HepG2 (cell line): ENCODE measurements at regions of chr6 and their contacts with region 1.

Region 1: DNA sequence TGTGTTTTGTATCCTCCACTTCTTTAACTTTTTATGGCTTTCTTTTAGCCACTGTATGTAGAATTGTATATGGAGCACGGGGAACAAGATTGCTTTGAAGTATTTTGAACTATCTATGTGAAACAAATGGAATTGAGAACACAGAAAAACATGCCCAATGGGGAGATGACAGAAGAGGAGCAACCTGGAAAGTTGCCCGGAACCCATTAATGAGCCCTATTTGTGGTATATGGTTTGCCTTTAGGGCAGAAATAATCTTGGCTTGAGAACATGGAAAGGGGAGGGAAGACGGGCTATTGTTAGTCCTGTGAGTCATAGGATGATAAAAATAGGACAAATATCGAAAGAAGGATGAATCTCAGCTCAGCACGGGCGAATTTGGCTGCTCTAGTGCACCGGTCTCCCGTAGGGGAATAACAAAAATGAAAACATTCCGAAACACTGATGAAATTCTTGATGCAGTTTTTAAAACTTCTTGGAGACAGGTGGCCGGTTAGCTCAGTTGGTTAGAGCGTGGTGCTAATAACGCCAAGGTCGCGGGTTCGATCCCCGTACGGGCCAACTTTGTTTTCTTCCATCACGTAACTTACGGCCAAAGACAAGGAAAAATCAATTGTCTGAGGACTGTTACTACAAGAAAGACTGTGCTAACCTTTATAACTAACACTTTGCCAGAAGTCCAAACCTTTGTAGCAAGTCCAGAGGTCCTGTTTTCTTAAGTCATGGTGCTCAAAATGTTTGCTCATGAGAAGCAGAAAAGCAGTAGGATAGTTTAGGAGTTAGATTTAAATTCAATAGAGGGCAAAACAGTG is 15.7 kb downstream of the HMGN4 start:
- DNase-seq: peak; percentile 81
- ATAC-seq: peak; percentile 39
- H3K4me3 ChIP-seq: peak overlapping the region; percentile 77 to 81 (median 80)
- H3K27ac ChIP-seq: peak overlapping the region; percentile 39
- H3K4me1 ChIP-seq: peaks cover 51% of the 10 kb centered on the region
- H3K27me3 ChIP-seq: no peaks in the 10 kb centered on the region; a peak in 1 of 5 replicates
- CTCF ChIP-seq: no peak
- EP300 ChIP-seq: no peak
- POLR2A ChIP-seq: no peak
- RAD21 ChIP-seq: 0 out of 2 replicates have a peak, but pooled peaks have one; percentile 5

Region 2: GRCh38 chr6:25913741-25914140 is 640.1 kb before region 1 on chr6:
- CTCF ChIA-PET with region 1: no interaction called
- POLR2A ChIA-PET with region 1: no interaction called
- in situ Hi-C with region 1: no loop called
- intact Hi-C with region 1: no loop called
- DNase-seq: peak; percentile 83
- ATAC-seq: peak; percentile 86
- H3K4me3 ChIP-seq: no peak overlapping the region; a peak in 1 of 6 replicates
- H3K27ac ChIP-seq: peak overlapping the region; percentile 62
- H3K4me1 ChIP-seq: peaks cover 58% of the 10 kb centered on the region
- H3K27me3 ChIP-seq: no peaks in the 10 kb centered on the region
- CTCF ChIP-seq: no peak
- EP300 ChIP-seq: peak in 1 of 2 experiments; percentile 78; a peak in 1 of 4 replicates
- POLR2A ChIP-seq: peak in 1 of 2 experiments; percentile 24; a peak in 1 of 4 replicates
- RAD21 ChIP-seq: no peak

Region 3: DNA sequence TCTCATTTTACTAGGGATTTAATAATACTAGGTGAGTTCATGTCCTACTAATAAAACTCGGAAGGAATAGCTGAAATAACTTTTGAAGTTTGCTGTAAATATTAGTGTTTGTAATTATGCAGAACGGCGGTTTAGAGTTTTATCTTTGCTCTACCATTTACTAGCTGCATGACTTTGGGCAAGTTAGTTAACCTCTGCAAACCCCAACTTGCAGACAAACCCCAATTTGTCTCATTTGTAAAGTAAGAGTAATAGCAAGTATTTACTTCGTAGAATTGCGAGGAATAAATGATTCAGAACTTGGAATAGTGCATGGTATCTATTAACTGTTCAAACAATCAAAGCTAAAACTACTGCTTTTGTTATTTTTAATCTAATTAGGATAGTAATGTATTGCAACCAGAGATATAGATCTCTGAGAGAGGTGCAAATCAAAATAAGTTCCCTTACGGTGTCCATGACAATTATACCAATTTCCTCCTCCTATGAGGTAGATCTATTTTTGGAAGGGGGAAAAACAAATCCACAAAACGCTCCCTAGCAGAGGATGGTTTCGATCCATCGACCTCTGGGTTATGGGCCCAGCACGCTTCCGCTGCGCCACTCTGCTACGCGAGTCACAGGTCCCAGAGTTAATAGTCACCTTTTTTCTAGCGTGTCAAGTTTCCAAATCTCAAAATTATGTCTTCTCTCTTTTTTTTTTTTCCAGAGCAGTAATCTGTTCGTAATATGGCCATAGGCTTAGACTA is 223.9 kb before region 1 on chr6:
- CTCF ChIA-PET with region 1: no interaction called
- POLR2A ChIA-PET with region 1: interaction called, 8 read pairs
- in situ Hi-C with region 1: loop called (anchors 5 kb)
- intact Hi-C with region 1: loop called (anchors 1 kb)
- DNase-seq: peak; percentile 68
- ATAC-seq: peak; percentile 51
- H3K4me3 ChIP-seq: peak overlapping the region; percentile 63 to 84 (median 76)
- H3K27ac ChIP-seq: peak overlapping the region; percentile 30
- H3K4me1 ChIP-seq: peaks cover 37% of the 10 kb centered on the region
- H3K27me3 ChIP-seq: no peaks in the 10 kb centered on the region; a peak in 2 of 5 replicates
- CTCF ChIP-seq: 0 out of 2 replicates have a peak, but pooled peaks have one; percentile 10
- EP300 ChIP-seq: no peak
- POLR2A ChIP-seq: no peak
- RAD21 ChIP-seq: no peak

Region 4: DNA sequence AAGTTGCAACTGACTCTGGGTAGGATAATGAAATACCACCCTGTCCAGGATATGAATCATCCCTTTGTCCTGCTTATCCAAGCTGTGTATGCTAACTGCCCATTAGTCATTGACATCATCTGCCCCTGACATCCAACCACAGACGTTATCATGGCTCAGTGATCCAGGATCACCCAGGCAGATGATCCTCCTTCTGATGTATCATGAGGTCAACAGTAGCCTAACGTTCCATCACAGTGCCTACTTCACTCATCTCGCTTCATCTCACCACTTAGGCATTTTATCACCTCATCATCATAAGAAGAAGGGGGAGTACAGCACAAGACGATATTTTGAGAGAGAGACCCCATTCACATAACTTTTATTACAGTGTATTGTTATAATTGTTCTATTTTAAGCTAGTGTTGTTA is 202.3 kb before region 1 on chr6:
- CTCF ChIA-PET with region 1: no interaction called
- POLR2A ChIA-PET with region 1: no interaction called
- in situ Hi-C with region 1: no loop called
- intact Hi-C with region 1: no loop called
- DNase-seq: peak; percentile 95
- ATAC-seq: peak; percentile 77
- H3K4me3 ChIP-seq: no peak overlapping the region
- H3K27ac ChIP-seq: peak overlapping the region; percentile 89
- H3K4me1 ChIP-seq: peaks cover 89% of the 10 kb centered on the region
- H3K27me3 ChIP-seq: no peaks in the 10 kb centered on the region
- CTCF ChIP-seq: no peak
- EP300 ChIP-seq: peak in 1 of 2 experiments; percentile 48; a peak in 1 of 4 replicates
- POLR2A ChIP-seq: no peak
- RAD21 ChIP-seq: no peak

Region 5: GRCh38 chr6:26493258-26493657 is 60.6 kb before region 1 on chr6:
- CTCF ChIA-PET with region 1: no interaction called
- POLR2A ChIA-PET with region 1: no interaction called
- in situ Hi-C with region 1: no loop called
- intact Hi-C with region 1: no loop called
- DNase-seq: peak; percentile 52
- ATAC-seq: peak; percentile 95
- H3K4me3 ChIP-seq: no peak overlapping the region
- H3K27ac ChIP-seq: no peak overlapping the region
- H3K4me1 ChIP-seq: peaks cover 21% of the 10 kb centered on the region
- H3K27me3 ChIP-seq: peaks cover 2 to 10% of the 10 kb centered on the region in 2 experiments; a peak in 1 of 5 replicates
- CTCF ChIP-seq: peak; percentile 64
- EP300 ChIP-seq: no peak
- POLR2A ChIP-seq: no peak
- RAD21 ChIP-seq: peak; percentile 66

Region 6: GRCh38 chr6:26532699-26533531 is 20.9 kb before region 1 on chr6:
- CTCF ChIA-PET with region 1: no interaction called
- POLR2A ChIA-PET with region 1: interaction called, 68 read pairs
- in situ Hi-C with region 1: no loop called
- intact Hi-C with region 1: loop called (anchors 1 kb)
- DNase-seq: peak; percentile 91
- ATAC-seq: peak; percentile 47
- H3K4me3 ChIP-seq: peak overlapping the region; percentile 67 to 78 (median 77)
- H3K27ac ChIP-seq: peak overlapping the region; percentile 56
- H3K4me1 ChIP-seq: peaks cover 37% of the 10 kb centered on the region
- H3K27me3 ChIP-seq: no peaks in the 10 kb centered on the region
- CTCF ChIP-seq: no peak
- EP300 ChIP-seq: 0 out of 4 replicates have a peak, but pooled peaks of 1 of the 2 experiments have one; percentile 47
- POLR2A ChIP-seq: no peak
- RAD21 ChIP-seq: peak; percentile 26; the same call in 1 of the 2 replicates

Region 7: DNA sequence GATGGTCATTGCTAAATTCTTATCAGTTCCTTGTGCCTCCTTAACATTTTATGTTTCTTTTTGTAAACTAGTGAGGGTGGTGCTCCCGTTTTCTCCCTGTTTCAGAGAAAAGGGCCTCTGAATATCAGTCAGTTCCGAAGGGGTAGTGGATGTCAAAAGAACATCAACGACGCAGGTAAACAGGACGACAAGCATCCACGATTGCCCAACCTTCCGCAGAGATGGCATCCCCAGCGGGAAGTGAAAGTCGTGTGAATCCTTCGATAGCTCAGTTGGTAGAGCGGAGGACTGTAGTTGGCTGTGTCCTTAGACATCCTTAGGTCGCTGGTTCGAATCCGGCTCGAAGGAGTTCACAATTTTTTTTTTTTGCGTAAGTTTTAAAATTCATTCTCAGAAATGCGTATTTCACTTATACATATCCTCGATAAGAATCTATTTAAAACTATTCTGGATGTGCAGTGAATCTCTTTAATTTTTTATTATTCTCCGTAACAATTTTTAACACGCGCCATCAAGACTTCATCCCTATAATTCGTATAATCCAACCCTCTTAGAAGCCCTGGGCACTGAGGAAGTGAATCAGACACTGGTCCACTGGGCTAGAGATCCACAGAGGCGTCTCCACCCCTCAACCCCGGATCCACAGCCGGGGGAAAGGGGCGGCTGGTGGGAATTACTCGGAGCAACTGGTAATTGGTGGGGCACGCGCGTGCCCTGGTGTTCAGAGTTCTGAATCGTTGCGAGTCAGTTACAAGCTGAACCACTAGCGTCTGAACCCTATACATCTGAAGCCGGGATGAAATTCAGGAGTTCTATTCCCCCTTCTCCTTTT is 15.0 kb after region 1 on chr6:
- CTCF ChIA-PET with region 1: no interaction called
- POLR2A ChIA-PET with region 1: interaction called, 10 read pairs
- in situ Hi-C with region 1: no loop called
- intact Hi-C with region 1: loop called (anchors 1 kb)
- DNase-seq: peak; percentile 95
- ATAC-seq: peak; percentile 35
- H3K4me3 ChIP-seq: peak overlapping the region; percentile 55 to 85 (median 78)
- H3K27ac ChIP-seq: peak overlapping the region; percentile 7
- H3K4me1 ChIP-seq: peaks cover 61% of the 10 kb centered on the region
- H3K27me3 ChIP-seq: no peaks in the 10 kb centered on the region; a peak in 1 of 5 replicates
- CTCF ChIP-seq: peak; percentile 5; the same call in 1 of the 2 replicates
- EP300 ChIP-seq: 0 out of 4 replicates have a peak, but pooled peaks of 1 of the 2 experiments have one; percentile 5
- POLR2A ChIP-seq: no peak
- RAD21 ChIP-seq: no peak

Region 8: DNA sequence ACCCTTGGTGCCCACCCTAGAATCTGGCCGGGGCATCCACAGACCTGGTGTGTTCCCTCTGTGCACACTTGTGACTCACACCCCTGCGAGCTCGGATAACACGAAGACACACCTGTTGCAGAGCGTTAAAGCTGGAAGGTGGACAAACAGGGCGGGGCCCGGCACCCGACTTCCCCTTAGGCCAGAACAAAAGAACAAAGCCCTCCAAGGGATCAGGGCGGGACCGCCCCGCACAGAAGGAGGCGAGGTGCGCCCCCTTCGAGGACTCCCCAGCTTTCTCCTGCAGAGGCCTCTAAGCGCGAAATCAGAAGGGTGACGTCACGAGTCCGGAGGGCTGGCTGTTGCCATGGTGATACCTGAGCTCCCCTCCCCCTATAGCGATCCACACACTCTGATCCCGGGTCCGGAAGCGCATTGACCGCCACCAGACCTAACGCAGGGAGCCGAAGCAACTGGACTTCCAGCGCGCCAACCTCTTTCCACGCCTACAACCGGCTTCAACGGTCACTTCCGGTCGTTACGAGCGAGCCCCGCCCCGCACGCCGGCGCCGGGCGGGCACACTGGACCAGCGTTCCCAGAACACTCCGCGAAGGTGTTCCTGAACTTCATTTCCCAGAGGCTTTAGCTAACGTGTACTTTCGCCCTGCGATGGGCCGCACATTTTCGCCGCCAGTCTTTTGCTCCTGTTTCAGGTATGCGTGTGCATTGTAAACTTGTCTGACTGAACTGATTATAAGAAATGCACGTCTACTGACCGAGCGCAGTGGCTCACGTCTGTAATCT is 919.0 kb after region 1 on chr6 and contains the start of gene ZNF184:
- CTCF ChIA-PET with region 1: no interaction called
- POLR2A ChIA-PET with region 1: no interaction called
- in situ Hi-C with region 1: no loop called
- intact Hi-C with region 1: loop called (anchors 10 kb)
- DNase-seq: peak; percentile 99
- ATAC-seq: peak; percentile 96
- H3K4me3 ChIP-seq: peak within 1 kb of the TSS; percentile 80 to 89 (median 84)
- H3K27ac ChIP-seq: peak within 1 kb of the TSS; percentile 91
- H3K4me1 ChIP-seq: peaks cover 33% of the 10 kb centered on the region
- H3K27me3 ChIP-seq: no peaks in the 10 kb centered on the region; a peak in 1 of 5 replicates
- CTCF ChIP-seq: peak; percentile 54
- EP300 ChIP-seq: no peak; a peak in 4 of 4 replicates
- POLR2A ChIP-seq: peak; percentile 85 to 93
- RAD21 ChIP-seq: no peak
- total RNA-seq, gene ZNF184: 10.1 and 16.3 TPM in 2 replicates